HEK293 (cell line): ENCODE measurements at regions of chr6 and their contacts with region 1.

Region 1: GRCh38 chr6:34196126-34196830 is 40.4 kb upstream of the HMGA1 start:
- H3K4me3 ChIP-seq: peak overlapping the region; percentile 30
- H3K27ac ChIP-seq: no peak overlapping the region
- H3K4me1 ChIP-seq: no peaks in the 10 kb centered on the region
- CTCF ChIP-seq: peak; percentile 97

Region 2: GRCh38 chr6:34161857-34162515 is 34.3 kb before region 1 on chr6:
- CTCF ChIA-PET with region 1: interaction called, 18 read pairs
- POLR2A ChIA-PET with region 1: no interaction called
- H3K4me3 ChIP-seq: no peak overlapping the region
- H3K27ac ChIP-seq: no peak overlapping the region
- H3K4me1 ChIP-seq: no peaks in the 10 kb centered on the region
- CTCF ChIP-seq: no peak

Region 3: GRCh38 chr6:34176261-34177031 is 19.8 kb before region 1 on chr6:
- CTCF ChIA-PET with region 1: interaction called, 10 read pairs
- POLR2A ChIA-PET with region 1: no interaction called
- H3K4me3 ChIP-seq: no peak overlapping the region
- H3K27ac ChIP-seq: no peak overlapping the region
- H3K4me1 ChIP-seq: no peaks in the 10 kb centered on the region
- CTCF ChIP-seq: no peak

Region 4: GRCh38 chr6:34182751-34183531 is 13.3 kb before region 1 on chr6:
- CTCF ChIA-PET with region 1: interaction called, 10 read pairs
- POLR2A ChIA-PET with region 1: no interaction called
- H3K4me3 ChIP-seq: no peak overlapping the region
- H3K27ac ChIP-seq: no peak overlapping the region
- H3K4me1 ChIP-seq: no peaks in the 10 kb centered on the region
- CTCF ChIP-seq: no peak

Region 5: DNA sequence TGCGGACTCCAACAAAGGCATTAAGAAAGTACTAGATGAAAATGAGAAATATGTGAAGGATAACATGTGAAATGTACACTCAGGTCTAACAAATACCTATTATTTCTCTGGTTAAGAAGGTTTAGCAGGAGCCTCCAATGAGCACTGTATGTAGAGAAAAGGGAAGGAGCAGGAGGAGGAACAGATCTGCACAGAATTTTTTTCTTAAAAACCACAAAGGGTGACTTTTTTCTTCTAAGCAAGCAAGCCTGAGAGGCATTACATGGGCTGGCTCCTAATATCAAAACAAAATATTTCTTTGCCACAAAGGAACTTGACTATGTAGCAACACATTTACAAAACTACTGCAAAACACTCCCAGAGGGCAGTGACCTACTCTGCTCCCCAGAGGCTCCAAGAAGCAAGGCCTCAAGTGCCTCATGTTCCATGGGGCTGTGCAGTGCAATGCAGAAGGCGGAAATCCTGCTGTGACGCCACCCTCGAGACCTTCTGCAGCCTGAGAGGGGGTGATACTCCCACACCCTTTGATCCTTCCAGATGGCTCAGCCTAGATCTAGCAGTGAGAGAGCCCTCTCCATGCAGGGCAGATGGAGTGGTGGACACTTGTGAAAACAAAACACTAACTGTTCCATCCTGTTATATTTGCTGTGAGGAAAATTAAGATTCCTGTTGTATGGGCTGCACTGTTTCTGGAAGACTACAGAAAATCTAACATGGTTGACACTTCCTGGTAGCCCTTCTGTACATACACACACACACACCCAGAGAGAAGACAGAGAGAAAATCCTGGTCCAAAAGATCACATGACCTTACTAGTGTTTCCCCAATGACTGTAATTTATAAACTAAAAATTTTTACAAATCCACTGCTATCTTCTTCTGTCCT is 88.5 kb after region 1 on chr6:
- CTCF ChIA-PET with region 1: no interaction called
- POLR2A ChIA-PET with region 1: no interaction called
- H3K4me3 ChIP-seq: no peak overlapping the region
- H3K27ac ChIP-seq: no peak overlapping the region
- H3K4me1 ChIP-seq: no peaks in the 10 kb centered on the region
- CTCF ChIP-seq: no peak

Region 6: DNA sequence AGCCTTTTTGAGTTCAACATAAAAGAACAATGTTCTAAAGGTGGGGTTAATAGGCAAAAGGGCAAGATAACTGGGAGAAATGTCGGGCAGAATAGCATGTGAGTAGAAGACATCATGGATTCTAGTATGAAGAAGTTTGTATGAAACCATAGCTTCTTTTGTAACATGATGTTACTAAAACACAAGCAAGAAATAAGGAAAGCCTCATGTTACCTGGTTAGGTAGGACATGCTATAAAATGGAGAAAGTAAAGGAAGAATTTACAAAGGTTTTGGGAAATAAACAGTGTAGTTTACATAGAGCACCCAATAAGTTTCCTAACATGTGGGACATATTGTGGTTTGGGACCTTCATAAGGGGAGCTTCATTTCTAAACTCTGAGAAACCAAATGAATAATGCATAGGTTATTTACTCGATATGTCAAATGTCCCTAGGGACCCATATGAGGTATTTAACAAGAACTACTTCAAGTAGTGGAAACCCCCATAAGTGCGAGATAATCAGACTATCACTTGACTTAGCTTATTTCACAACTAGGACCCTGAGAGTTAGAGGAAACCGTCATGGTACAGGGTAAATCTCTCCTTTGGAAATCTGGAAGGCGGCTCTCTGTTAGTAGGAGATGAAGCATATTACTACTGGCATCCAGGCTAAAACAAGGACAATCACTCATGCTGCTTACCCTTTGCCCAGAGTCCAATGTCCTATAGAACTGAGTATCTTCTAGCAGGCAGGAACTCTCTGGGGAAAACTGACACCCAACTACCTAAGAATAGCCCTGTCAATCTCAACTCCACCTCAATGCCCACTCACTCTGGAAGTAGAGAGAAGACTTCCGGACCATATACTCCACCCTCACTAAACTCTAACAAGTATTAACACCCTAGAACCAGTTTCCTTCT is 442.8 kb after region 1 on chr6:
- CTCF ChIA-PET with region 1: no interaction called
- POLR2A ChIA-PET with region 1: no interaction called
- H3K4me3 ChIP-seq: no peak overlapping the region
- H3K27ac ChIP-seq: no peak overlapping the region
- H3K4me1 ChIP-seq: no peaks in the 10 kb centered on the region
- CTCF ChIP-seq: no peak